CD8-positive, alpha-beta memory T cell (primary cell): ENCODE measurements at regions of chr11 and their contacts with region 1.

Region 1: DNA sequence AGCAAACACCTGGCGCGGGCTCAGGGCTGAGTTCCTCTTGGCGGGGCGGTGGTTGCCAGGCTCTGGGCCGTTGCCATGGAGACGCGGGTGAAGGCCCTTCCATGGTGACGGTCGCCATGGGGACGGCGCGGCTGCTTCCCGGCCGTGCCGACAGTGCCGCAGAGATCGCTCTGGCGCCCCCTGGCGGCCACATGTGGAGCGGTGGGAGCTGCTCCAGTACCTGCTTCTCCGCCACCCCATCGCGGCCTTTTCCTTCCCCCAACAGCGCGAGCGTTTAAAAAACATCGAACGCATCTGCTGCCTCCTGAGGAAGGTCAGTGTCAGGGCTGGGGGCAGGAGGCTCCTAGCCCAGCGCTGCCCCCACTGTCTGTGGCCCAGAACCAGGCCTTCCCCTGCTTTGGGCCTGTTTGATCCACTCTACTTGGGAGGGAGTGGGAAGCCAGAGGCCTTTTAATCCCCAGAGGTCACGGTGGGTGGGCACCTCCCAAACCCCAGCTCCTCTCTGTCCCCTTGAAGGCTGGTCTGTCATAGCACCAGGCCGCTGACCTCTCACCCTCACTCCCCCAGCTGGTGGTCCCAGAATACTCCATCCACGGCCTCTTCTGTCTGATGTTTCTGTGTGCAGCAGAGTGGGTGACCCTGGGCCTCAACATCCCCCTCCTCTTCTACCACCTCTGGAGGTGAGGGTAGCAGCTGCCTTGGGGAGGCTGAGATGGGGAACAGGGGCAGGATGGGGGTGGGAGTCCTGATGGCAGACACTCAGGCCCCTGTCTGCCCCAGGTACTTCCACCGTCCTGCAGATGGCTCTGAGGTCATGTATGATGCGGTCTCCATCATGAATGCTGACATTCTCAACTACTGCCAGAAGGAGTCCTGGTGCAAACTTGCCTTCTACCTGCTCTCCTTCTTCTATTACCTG is 4.8 kb downstream of the CNIH2 start:
- DNase-seq: peak; percentile 98 to 100 (median 100)
- H3K4me3 ChIP-seq: no peak overlapping the region
- H3K4me3 Mint-ChIP-seq: peak overlapping the region; percentile 35 to 85 (median 56)
- H3K27ac ChIP-seq: no peak overlapping the region
- H3K27ac Mint-ChIP-seq: peak overlapping the region; percentile 54 to 97 (median 92)
- H3K4me1 ChIP-seq: peaks cover 35% of the 10 kb centered on the region
- H3K4me1 Mint-ChIP-seq: peaks cover 31 to 49% (median 37%) of the 10 kb centered on the region in 3 donors
- H3K27me3 ChIP-seq: no peaks in the 10 kb centered on the region
- H3K27me3 Mint-ChIP-seq: peaks cover 0 to 7% of the 10 kb centered on the region in 2 donors

Region 2: DNA sequence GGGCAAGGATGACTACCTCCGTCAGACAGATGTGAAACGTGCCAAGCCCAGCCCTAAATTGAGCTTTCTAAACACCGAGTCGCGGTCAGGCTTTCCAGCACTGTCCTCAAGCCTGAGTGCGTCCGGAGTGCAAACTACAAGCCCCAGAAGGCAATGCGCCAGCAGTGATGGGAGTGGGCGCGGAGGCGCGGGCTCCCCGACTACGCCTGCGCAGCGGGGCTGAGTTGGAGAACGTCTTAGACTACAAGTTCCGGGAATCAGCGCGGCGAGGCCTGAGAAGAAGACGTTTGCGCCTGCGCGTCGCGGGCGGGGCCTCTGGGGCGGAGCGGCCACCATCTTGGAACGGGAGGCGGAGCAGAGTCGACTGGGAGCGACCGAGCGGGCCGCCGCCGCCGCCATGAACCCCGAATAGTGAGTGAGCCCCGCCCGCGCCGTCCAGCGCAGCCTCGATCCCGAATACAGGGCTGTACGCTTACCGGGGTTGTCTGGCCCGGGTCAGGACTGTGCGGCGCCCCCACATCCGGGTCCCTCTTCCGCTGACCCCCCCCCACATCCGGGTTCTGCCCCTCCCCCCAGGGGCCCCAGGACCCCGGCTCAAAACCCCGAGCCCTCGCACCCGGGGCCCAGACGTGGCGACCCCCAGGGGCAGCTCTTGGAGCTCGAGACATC is 14.3 kb before region 1 on chr11 and contains the start of gene RAB1B:
- CTCF ChIA-PET with region 1: interaction called, 25 read pairs
- POLR2A ChIA-PET with region 1: interaction called, 8 read pairs
- DNase-seq: peak; percentile 99 to 100 (median 100)
- H3K4me3 ChIP-seq: peak within 1 kb of the TSS; percentile 73
- H3K4me3 Mint-ChIP-seq: peak within 1 kb of the TSS; percentile 90 to 97 (median 95)
- H3K27ac ChIP-seq: peak within 1 kb of the TSS; percentile 71
- H3K27ac Mint-ChIP-seq: peak within 1 kb of the TSS; percentile 94 to 99 (median 98)
- H3K4me1 ChIP-seq: peaks cover 40% of the 10 kb centered on the region
- H3K4me1 Mint-ChIP-seq: peaks cover 50 to 56% (median 54%) of the 10 kb centered on the region in 3 donors
- H3K27me3 ChIP-seq: no peaks in the 10 kb centered on the region
- H3K27me3 Mint-ChIP-seq: peaks cover 0 to 7% of the 10 kb centered on the region in 2 donors
- total RNA-seq, gene RAB1B: 119 to 125 TPM